ENCODE measurements at regions of chr1 and their contacts with region 1.

Region 1: GRCh38 chr1:181142096-181142958 is 53.8 kb downstream of the IER5 start:
- DNase-seq: peak; percentile 76 to 97
- H3K4me3 ChIP-seq: peak overlapping the region in 2 of 4 experiments; percentile 6 to 45; a peak in 2 of 8 replicates
- H3K27ac ChIP-seq: no peak overlapping the region
- H3K4me1 ChIP-seq: peaks cover 0 to 3% (median 2%) of the 10 kb centered on the region in 4 experiments; a peak in 3 of 7 replicates
- H3K27me3 ChIP-seq: peaks cover 0 to 2% (median under 1%) of the 10 kb centered on the region in 4 experiments; a peak in 1 of 7 replicates
- CTCF ChIP-seq: peak; percentile 97 to 98 (median 98)
- EP300 ChIP-seq: 0 out of 3 replicates have a peak, but pooled peaks of 1 of the 2 experiments have one; percentile 29
- POLR2A ChIP-seq: no peak
- RAD21 ChIP-seq: peak; percentile 100

Region 2: DNA sequence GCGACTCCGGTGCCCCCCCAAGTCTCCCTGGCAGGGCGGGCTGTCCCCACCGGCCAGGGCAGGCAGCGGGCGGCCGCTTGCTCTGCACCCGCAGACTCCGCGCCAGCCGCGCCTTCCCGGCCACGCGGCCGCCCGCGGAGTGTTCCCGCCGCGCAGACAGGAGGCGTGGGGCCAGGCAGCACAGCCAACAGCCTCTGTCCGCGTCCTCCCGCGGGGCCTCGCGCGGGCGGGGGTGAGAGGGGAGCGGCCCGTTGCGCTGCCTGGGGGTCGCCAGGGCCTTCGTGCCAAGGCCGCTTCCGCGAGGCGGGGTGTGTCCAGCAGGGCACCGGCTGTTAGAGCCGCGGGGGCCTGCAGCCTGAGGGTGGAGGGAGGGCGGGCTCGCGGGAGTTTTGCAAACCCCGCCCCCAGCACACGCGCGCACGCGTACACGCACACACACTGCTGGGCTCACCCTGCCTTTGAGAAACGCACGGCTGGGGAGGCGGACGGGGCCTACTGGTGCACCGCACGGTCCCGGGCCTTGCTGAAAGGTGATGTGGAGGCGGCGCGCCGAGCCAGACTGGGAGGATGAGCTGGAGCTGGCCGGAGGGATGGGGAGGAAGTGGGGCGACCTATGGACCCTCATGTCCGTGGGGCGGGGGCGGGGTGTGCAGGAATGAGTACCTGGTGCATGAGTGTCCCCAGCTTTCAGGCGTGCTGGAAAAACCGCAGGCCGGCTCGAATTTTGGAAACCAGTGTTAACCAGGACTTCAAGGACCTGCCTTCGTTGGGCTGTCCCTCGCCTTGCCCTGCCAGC is 188.1 kb before region 1 on chr1:
- CTCF ChIA-PET with region 1: interaction called, 20 read pairs
- POLR2A ChIA-PET with region 1: no interaction called
- DNase-seq: no peak
- H3K4me3 ChIP-seq: peak overlapping the region; percentile 10 to 58 (median 12); a peak in 5 of 8 replicates
- H3K27ac ChIP-seq: no peak overlapping the region
- H3K4me1 ChIP-seq: peaks cover 0 to 6% (median 4%) of the 10 kb centered on the region in 4 experiments; a peak in 3 of 7 replicates
- H3K27me3 ChIP-seq: no peaks in the 10 kb centered on the region
- CTCF ChIP-seq: no peak
- EP300 ChIP-seq: no peak
- POLR2A ChIP-seq: no peak
- RAD21 ChIP-seq: no peak

Region 3: DNA sequence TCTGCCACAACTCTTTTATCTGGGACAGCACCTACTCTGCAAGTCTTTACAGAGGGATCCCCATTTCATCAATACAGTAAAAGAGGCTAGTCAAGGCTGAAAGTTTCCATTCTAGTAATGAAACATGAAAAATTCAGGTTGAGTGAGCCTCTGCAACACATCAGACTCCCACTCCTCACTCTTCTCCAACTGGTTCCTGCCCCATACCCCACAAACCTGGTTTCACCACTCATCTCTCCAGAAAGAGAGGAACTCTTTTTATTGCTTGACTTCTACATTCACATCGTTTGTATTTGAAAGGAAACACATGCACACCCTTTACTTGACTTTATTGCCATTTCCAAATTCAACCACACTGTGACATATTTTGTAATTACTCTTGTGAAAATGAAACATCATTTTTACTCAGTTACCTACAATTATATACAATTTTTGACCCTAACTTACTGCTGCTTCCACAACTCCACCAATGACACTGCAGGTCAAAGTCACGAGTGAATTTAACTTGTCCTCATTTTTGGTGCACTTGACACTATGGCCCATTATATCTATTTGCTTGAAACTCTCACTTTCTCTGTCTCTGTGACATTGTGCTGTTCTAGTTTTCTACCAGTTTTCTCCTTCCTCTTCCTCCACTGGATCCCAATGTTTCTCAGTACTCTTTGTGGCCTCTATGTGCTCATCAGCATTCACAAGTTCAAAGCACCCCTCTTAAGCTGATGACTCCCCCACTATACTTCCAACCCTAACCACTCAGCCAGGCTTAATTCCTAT is 127.7 kb before region 1 on chr1:
- CTCF ChIA-PET with region 1: interaction called, 14 read pairs
- POLR2A ChIA-PET with region 1: no interaction called
- DNase-seq: no peak
- H3K4me3 ChIP-seq: no peak overlapping the region
- H3K27ac ChIP-seq: no peak overlapping the region
- H3K4me1 ChIP-seq: peaks cover 0 to 3% (median 0%) of the 10 kb centered on the region in 4 experiments; a peak in 2 of 7 replicates
- H3K27me3 ChIP-seq: no peaks in the 10 kb centered on the region
- CTCF ChIP-seq: no peak
- EP300 ChIP-seq: no peak
- POLR2A ChIP-seq: no peak
- RAD21 ChIP-seq: no peak

Region 4: GRCh38 chr1:181044449-181044966 is 97.8 kb before region 1 on chr1:
- CTCF ChIA-PET with region 1: interaction called, 142 read pairs
- POLR2A ChIA-PET with region 1: interaction called, 3 read pairs
- DNase-seq: no peak
- H3K4me3 ChIP-seq: no peak overlapping the region
- H3K27ac ChIP-seq: no peak overlapping the region
- H3K4me1 ChIP-seq: peaks cover 0 to 4% (median 2%) of the 10 kb centered on the region in 4 experiments; a peak in 4 of 7 replicates
- H3K27me3 ChIP-seq: no peaks in the 10 kb centered on the region
- CTCF ChIP-seq: no peak
- EP300 ChIP-seq: no peak
- POLR2A ChIP-seq: no peak
- RAD21 ChIP-seq: no peak

Region 5: DNA sequence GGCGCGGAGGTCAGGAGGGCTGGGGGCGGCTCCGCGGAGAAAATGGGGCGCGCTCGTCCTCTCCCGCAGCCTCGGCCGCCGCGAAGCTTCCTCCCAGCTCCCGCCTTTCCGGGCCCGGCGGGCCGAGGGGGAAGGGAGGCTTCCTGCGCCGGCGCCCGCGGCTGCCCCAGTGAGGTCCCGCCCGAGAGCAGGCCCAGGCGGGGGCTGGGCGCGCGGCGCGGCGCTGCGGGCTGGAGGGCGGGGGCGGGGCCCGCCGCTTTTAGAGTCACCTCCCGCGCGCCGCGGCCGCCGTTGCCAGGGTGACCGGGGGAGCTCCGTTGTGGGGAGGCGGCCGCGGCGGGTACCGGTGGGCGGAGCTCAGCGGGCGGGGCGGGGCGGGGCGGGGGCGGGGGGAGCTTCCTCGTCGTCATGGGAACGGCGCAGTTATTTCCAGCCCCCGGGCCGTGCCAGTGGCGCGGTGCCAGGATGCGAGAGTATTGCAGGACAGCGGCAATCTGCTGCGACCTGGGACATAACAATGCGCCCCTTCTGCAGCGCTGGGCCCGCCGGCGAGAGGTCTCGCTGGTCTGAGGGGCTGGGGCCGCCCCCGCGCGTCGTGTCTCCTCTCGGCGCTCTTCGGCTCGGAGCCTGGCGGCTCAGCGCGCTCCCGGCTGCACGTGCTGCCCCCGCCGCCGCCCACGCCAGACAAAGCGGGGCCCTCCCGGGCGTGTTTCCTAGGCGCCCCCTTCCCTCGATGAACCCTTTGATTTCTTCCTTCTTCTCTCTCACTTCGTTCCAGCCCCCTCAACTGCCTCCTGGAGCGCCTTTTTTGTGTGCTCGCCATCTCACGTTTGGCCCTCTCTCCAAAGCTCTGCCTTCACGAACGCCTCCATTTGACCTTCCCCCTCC is 36.9 kb before region 1 on chr1:
- CTCF ChIA-PET with region 1: interaction called, 115 read pairs
- POLR2A ChIA-PET with region 1: interaction called, 27 read pairs
- DNase-seq: peak in 1 of 2 experiments; percentile 86
- H3K4me3 ChIP-seq: peak overlapping the region; percentile 53 to 75 (median 64)
- H3K27ac ChIP-seq: peak overlapping the region; percentile 62; the same call in 1 of the 2 replicates
- H3K4me1 ChIP-seq: peaks cover 8 to 40% (median 21%) of the 10 kb centered on the region in 4 experiments
- H3K27me3 ChIP-seq: peaks cover 9 to 42% (median 41%) of the 10 kb centered on the region in 4 experiments
- CTCF ChIP-seq: no peak
- EP300 ChIP-seq: no peak
- POLR2A ChIP-seq: 0 out of 3 replicates have a peak, but pooled peaks of 1 of the 2 experiments have one; percentile 27
- RAD21 ChIP-seq: no peak

Region 6: DNA sequence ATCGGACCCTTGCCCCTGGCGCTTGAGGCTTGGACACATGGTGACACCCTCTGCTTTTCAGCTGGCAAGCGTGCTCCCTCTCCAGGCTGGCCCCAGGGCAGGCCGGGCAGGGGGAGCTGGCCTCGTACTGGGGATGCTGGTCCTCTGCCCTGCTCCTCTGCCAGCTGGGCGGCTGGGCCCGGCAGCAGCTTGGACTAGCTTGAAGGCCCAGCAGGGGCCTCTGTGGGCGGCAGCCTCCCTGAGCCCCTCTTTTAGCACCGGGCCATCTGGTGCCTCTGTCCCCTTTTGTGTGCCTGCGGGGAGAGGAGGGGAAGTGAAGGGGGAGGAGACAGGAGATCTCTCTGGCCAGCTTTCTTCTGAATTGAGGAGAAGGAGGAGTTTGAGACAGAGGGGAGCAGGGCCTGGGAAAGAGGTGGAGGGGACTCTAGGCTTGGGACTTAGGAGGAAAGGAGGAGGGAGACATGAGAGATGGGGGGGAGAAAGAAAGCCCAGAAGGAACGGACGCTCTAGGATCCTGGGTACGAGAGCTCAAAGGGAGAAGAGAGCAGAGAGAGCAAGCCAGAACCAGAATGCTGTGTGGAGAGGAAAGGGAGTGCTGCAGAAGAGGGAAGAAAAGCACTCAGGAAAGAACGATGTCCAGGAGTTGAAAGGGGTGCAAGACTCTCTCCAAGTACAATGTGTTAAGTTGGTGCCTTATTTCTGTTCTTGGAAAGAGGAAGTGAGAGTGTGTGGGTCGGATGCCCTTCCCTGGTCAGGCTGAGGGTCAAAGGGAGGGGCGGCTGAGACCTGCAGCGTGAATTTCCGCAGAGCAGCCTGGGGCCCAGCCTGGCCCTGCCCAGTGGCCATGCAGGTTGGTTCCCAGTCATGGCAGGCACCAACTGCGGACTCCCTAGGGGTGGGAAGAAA is 13.5 kb before region 1 on chr1:
- CTCF ChIA-PET with region 1: interaction called, 20 read pairs
- POLR2A ChIA-PET with region 1: interaction called, 5 read pairs
- DNase-seq: peak in 1 of 2 experiments; percentile 61
- H3K4me3 ChIP-seq: peak overlapping the region in 1 of 4 experiments; percentile 17; a peak in 1 of 8 replicates
- H3K27ac ChIP-seq: no peak overlapping the region
- H3K4me1 ChIP-seq: peaks cover 16 to 38% (median 26%) of the 10 kb centered on the region in 4 experiments
- H3K27me3 ChIP-seq: no peaks in the 10 kb centered on the region; a peak in 1 of 7 replicates
- CTCF ChIP-seq: no peak
- EP300 ChIP-seq: no peak
- POLR2A ChIP-seq: no peak
- RAD21 ChIP-seq: 0 out of 4 replicates have a peak, but pooled peaks of 1 of the 2 experiments have one; percentile 5

Region 7: GRCh38 chr1:181166377-181167196 is 24.3 kb after region 1 on chr1:
- CTCF ChIA-PET with region 1: interaction called, 78 read pairs
- POLR2A ChIA-PET with region 1: no interaction called
- DNase-seq: peak in 1 of 2 experiments; percentile 80
- H3K4me3 ChIP-seq: no peak overlapping the region
- H3K27ac ChIP-seq: no peak overlapping the region
- H3K4me1 ChIP-seq: no peaks in the 10 kb centered on the region
- H3K27me3 ChIP-seq: peaks cover 0 to 2% (median 0%) of the 10 kb centered on the region in 4 experiments; a peak in 1 of 7 replicates
- CTCF ChIP-seq: peak; percentile 32 to 88 (median 83)
- EP300 ChIP-seq: no peak
- POLR2A ChIP-seq: no peak
- RAD21 ChIP-seq: peak; percentile 96 to 97

Region 8: DNA sequence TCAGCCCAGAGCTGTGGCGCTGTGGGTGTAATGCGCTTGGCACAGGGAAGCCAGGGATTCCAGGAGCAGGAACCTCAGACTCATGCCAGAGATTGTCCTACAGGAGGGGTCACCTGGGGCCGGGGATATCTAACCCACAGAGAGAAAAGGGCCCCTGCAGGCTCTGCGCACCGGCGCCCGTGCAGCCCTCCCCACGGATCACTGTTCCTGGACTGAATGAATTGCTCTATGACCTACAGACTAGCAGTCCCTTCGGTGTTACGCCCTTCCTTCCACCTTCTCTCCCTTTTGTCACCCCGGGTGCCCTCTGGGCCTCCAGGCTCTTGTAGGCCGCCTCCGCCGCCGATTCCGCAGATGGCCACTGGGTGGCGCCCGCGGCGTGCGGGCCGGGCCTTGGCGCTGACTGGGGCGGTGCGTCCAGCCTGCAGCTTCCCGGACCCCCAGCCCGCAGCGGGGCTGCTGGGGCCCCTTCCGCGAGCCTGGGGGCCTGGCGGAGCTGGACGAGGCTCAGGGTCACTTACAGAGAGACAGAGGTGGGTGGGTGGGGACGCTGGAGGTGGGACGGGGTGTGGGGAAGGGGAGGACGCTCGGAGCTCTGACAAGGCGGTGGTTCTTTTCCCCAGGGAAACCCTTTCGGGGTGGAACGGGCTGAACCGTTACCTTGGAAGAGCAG is 47.5 kb after region 1 on chr1:
- CTCF ChIA-PET with region 1: no interaction called
- POLR2A ChIA-PET with region 1: no interaction called
- DNase-seq: peak; percentile 58 to 98
- H3K4me3 ChIP-seq: peak overlapping the region in 3 of 4 experiments; percentile 16 to 63 (median 26); a peak in 4 of 8 replicates
- H3K27ac ChIP-seq: no peak overlapping the region
- H3K4me1 ChIP-seq: peaks cover 0 to 2% (median 0%) of the 10 kb centered on the region in 4 experiments; a peak in 1 of 7 replicates
- H3K27me3 ChIP-seq: peaks cover 0 to 8% (median 4%) of the 10 kb centered on the region in 4 experiments; a peak in 2 of 7 replicates
- CTCF ChIP-seq: peak; percentile 91 to 99 (median 95)
- EP300 ChIP-seq: 0 out of 3 replicates have a peak, but pooled peaks of 1 of the 2 experiments have one; percentile 48
- POLR2A ChIP-seq: no peak
- RAD21 ChIP-seq: peak; percentile 97 to 100

Measured in H1 (cell line).